Right ventricle myocardium superior (tissue), 1 donor: ENCODE measurements at regions of chr22 and their contacts with region 1.

Region 1: DNA sequence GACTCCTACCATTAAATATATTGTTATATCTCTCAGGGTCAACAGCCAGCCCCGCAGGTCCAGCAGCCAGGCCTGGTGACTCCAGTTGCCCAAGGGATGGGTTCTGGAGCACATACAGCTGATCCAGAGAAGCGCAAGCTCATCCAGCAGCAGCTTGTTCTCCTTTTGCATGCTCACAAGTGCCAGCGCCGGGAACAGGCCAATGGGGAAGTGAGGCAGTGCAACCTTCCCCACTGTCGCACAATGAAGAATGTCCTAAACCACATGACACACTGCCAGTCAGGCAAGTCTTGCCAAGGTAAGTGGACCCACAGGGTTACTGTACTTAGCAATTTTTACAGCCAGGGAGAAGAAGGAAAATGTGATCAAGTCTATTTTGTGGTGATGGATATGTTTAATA is 35.1 kb downstream of the EP300 start:
- DNase-seq: peak; percentile 58
- ATAC-seq: no peak

Region 2: DNA sequence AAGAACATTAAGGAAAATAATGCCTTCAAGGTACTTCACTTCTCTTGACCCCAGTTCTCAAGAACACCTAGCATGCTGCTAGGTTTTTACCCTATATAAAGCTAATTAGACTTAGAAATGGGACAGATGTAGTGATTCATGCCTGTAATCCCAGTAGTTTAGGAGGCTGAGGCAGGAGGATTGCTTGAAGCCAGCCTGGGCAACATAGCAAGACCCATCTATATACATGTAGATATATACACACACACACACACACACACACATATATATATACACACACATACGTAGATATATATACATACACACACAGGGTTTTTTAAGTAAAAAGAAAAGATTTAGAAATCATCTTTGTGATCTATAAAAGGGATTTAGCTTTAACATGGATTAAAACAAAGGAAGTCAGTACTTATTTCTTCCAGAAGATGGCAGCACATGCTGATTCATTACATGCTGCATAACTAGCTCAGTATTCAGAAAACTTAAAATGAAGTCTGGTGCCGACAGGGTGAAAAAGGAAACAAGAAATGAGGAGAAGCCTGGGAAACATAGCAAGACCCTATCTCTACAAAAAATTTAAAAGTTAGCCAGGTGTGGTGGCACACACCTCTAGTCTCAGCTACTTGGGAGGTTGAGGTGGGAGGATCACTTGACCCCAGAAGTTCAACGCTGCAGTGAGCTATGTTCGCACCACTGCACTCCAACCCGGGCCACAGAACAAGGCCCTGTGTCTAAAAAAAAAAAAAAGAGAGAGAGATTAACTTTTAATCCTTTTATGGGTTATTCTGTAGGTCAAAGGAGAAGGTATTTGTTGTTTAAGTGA is 204.8 kb before region 1 on chr22:
- intact Hi-C with region 1: loop called (anchors 10 kb)
- DNase-seq: no peak
- ATAC-seq: peak; percentile 85

Region 3: DNA sequence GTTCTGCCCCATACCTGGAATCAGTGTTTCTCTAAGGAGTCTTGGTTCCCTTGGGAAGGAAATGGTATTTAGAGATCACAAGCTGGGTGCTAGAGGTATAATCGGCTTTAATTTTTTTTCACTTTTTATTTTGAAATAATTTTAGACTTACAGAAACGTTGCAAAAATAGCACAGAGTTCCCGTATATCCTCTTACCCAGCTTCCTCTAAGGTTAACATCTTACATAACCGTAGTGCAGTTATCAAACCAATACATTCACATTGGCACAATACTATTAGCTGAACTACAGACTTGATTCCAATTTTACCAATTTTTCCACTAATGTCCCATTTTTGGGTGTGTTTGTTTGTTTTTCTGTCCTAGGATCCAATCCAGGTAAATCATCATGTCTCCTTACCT is 112.4 kb before region 1 on chr22:
- intact Hi-C with region 1: no loop called
- DNase-seq: no peak
- ATAC-seq: no peak